Activated B cell treated with CpG ODN at 0.5 μM for 24 hours (primary cell): ENCODE measurements at regions of chr1 and their contacts with region 1.

Region 1: DNA sequence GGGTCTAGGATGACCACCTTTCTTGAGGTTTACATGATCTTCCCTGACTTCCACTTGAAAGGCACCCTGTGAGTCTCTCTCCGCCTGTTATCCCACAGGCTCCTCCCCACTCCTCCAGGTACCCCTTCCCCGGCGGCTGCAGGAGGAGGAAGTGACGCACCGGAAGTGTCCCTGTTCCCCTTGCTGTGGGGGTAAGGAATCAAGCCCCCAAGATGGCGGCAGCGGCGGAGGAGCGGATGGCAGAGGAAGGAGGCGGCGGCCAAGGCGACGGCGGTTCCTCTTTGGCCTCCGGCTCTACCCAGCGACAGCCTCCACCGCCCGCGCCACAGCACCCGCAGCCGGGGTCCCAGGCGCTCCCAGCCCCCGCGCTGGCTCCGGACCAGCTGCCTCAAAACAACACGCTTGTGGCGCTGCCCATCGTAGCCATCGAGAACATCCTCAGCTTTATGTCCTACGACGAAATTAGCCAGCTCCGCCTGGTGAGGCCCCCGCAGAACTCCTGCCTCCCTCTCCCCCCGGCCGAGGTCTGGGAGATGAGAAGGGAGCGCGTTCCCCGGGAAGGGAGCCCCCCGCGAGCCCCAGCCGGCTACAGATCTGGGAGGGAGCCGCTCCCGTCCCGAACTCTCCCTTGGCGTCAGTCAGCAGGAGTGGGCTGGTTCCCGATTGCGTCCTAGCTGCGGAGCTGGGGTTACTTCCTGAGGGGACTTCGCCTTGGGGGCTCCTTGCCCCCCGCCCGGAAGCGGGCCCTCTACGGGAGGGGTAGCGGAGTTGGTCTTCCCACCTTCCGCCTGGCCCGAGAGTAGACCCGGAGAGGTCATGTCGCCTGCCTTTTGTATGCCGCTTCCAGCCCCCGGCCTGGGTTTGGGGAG is at the start of gene FBXO28:
- DNase-seq: peak; percentile 84
- ATAC-seq: peak; percentile 95
- H3K4me3 Mint-ChIP-seq: peak within 1 kb of the TSS; percentile 92
- H3K27ac Mint-ChIP-seq: peak within 1 kb of the TSS; percentile 94
- H3K4me1 Mint-ChIP-seq: peaks cover 28% of the 10 kb centered on the region
- H3K27me3 Mint-ChIP-seq: peaks cover 4% of the 10 kb centered on the region
- CTCF ChIP-seq: no peak
- total RNA-seq, gene FBXO28: 27.5 and 30.4 TPM in 2 replicates

Region 2: DNA sequence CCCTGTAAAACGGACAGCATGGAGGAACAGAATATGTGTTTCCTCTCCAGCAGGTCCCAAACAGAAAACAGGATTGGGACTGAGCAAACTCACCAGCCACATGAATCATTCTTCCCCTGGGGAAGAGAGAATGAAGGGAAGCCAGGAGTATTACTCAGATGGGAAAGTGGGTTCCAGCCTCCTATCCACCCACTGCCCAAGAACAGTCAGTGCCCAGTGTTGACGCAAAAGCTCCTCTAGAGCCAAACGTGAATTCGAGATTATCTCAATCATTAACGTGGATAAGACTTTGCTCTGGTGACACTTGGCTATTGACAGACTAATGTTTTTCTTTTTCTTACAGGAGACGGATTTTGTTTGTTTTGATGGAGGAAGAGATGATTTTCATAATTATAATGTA is 1486.9 kb before region 1 on chr1:
- CTCF ChIA-PET with region 1: no interaction called
- POLR2A ChIA-PET with region 1: no interaction called
- intact Hi-C with region 1: no loop called
- DNase-seq: no peak
- ATAC-seq: no peak
- H3K4me3 Mint-ChIP-seq: no peak overlapping the region
- H3K27ac Mint-ChIP-seq: no peak overlapping the region
- H3K4me1 Mint-ChIP-seq: no peaks in the 10 kb centered on the region
- H3K27me3 Mint-ChIP-seq: no peaks in the 10 kb centered on the region
- CTCF ChIP-seq: no peak

Region 3: DNA sequence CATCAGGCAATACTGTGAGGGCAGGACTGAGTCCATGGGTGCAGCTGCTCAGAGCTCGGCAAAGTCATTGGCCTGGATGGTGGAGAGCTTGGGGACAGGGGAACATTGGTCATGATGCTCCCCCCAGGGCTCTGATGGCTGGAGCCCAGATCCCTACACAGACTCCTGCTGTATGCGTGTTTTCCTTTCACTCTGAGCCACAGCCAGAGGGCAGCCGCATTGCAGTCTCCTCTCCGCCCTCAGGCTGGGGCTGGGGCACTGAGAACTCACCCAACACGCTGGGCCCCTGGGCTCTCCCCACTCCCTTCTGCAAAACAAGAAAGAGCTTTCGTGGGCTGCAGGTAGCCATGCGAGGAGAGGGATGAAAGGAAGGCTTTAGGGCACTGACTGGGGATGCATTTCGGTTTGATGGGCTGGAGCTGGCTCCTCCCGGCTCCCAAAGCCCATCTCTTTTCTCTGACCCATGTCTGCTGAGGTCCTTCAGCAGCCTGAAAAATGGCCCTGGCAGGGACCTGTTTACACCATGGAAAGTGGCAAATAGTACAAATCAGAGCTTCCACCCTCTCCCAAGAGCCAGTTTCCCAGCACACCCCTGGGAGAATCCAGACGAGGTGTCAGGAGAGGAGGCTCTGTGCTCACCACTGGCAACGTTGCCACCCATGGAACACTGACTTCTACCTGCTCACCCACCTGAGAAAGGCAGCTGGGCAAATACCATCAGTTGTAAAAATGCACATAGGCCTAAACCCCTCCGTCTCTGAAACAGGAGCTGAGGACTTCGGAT is 358.0 kb before region 1 on chr1:
- CTCF ChIA-PET with region 1: no interaction called
- POLR2A ChIA-PET with region 1: no interaction called
- intact Hi-C with region 1: no loop called
- DNase-seq: no peak
- ATAC-seq: no peak
- H3K4me3 Mint-ChIP-seq: no peak overlapping the region
- H3K27ac Mint-ChIP-seq: no peak overlapping the region
- H3K4me1 Mint-ChIP-seq: no peaks in the 10 kb centered on the region
- H3K27me3 Mint-ChIP-seq: no peaks in the 10 kb centered on the region
- CTCF ChIP-seq: no peak

Region 4: DNA sequence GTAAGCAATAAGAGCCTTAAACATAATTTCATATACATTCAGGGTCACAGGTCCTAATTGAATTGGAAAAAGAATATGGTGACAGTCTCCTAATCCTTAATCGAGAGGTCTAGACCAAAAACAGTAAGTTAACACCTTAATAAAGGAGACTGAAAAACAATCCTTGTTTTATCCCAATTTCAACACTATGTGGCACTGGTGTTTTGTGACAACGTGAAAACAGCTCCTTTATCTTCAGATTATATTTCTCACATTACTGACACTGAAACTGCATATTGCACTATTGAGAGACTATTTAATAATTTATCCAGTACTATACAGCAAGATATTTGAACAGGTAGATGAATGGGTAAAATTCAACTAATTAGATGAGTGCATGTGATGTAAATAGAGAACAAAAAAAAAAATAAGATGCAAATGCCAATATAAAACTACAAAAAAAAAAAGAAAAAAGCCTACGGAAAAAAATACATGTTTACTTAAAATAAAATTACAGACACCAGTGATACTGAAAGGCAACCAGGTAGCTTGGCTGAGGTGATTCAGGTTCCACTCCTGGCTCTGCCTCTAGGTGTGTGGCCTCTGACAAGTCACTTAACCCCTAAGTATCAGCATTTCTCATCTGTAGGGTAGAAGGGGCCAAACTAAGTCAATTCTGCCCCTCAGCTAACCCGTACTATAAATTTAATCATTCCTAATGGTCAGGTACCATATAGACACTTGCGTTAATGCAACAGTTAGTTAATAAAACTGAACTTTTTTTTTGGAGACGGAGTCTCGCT is 302.3 kb before region 1 on chr1:
- CTCF ChIA-PET with region 1: no interaction called
- POLR2A ChIA-PET with region 1: no interaction called
- intact Hi-C with region 1: loop called (anchors 5 kb)
- DNase-seq: no peak
- ATAC-seq: peak; percentile 42
- H3K4me3 Mint-ChIP-seq: no peak overlapping the region
- H3K27ac Mint-ChIP-seq: no peak overlapping the region
- H3K4me1 Mint-ChIP-seq: peaks cover 13% of the 10 kb centered on the region
- H3K27me3 Mint-ChIP-seq: no peaks in the 10 kb centered on the region
- CTCF ChIP-seq: no peak

Region 5: GRCh38 chr1:224182866-224183590 is 68.9 kb after region 1 on chr1 and contains the start of gene DEGS1:
- CTCF ChIA-PET with region 1: interaction called, 5 read pairs
- POLR2A ChIA-PET with region 1: interaction called, 9 read pairs
- intact Hi-C with region 1: loop called (anchors 1 kb)
- DNase-seq: peak; percentile 83
- ATAC-seq: peak; percentile 80
- H3K4me3 Mint-ChIP-seq: peak within 1 kb of the TSS; percentile 90
- H3K27ac Mint-ChIP-seq: peak within 1 kb of the TSS; percentile 91
- H3K4me1 Mint-ChIP-seq: peaks cover 58% of the 10 kb centered on the region
- H3K27me3 Mint-ChIP-seq: no peaks in the 10 kb centered on the region
- CTCF ChIP-seq: no peak
- total RNA-seq, gene DEGS1: 55.5 and 55.9 TPM in 2 replicates

Region 6: GRCh38 chr1:224380003-224380402 is 265.9 kb after region 1 on chr1:
- CTCF ChIA-PET with region 1: no interaction called
- POLR2A ChIA-PET with region 1: interaction called, 13 read pairs
- intact Hi-C with region 1: no loop called
- DNase-seq: no peak
- ATAC-seq: no peak
- H3K4me3 Mint-ChIP-seq: peak overlapping the region; percentile 25
- H3K27ac Mint-ChIP-seq: no peak overlapping the region
- H3K4me1 Mint-ChIP-seq: peaks cover 23% of the 10 kb centered on the region
- H3K27me3 Mint-ChIP-seq: no peaks in the 10 kb centered on the region
- CTCF ChIP-seq: no peak

Region 7: GRCh38 chr1:224454397-224455066 is 340.4 kb after region 1 on chr1:
- CTCF ChIA-PET with region 1: interaction called, 25 read pairs
- POLR2A ChIA-PET with region 1: no interaction called
- intact Hi-C with region 1: loop called (anchors 1 kb)
- DNase-seq: no peak
- ATAC-seq: no peak
- H3K4me3 Mint-ChIP-seq: no peak overlapping the region
- H3K27ac Mint-ChIP-seq: no peak overlapping the region
- H3K4me1 Mint-ChIP-seq: peaks cover 13% of the 10 kb centered on the region
- H3K27me3 Mint-ChIP-seq: no peaks in the 10 kb centered on the region
- CTCF ChIP-seq: no peak